CD4-positive, alpha-beta T cell (primary cell): ENCODE measurements at regions of chr19 and their contacts with region 1.

Region 1: GRCh38 chr19:4007021-4007835 is at the start of gene PIAS4:
- DNase-seq: peak; percentile 93 to 99 (median 96)
- ATAC-seq: peak; percentile 87
- H3K4me3 ChIP-seq: peak within 1 kb of the TSS; percentile 85
- H3K4me3 Mint-ChIP-seq: peak within 1 kb of the TSS; percentile 89
- H3K27ac ChIP-seq: peak within 1 kb of the TSS in 1 of 2 donors; percentile 60
- H3K27ac Mint-ChIP-seq: peak within 1 kb of the TSS; percentile 80
- H3K4me1 ChIP-seq: peaks cover 48% of the 10 kb centered on the region
- H3K4me1 Mint-ChIP-seq: peaks cover 15% of the 10 kb centered on the region
- H3K27me3 ChIP-seq: no peaks in the 10 kb centered on the region
- H3K27me3 Mint-ChIP-seq: no peaks in the 10 kb centered on the region
- CTCF ChIP-seq: peak; percentile 24
- total RNA-seq, gene PIAS4: 14.5 to 16.5 TPM

Region 2: GRCh38 chr19:3950871-3951861 is 56.1 kb before region 1 on chr19:
- CTCF ChIA-PET with region 1: no interaction called
- POLR2A ChIA-PET with region 1: no interaction called
- intact Hi-C with region 1: no loop called
- DNase-seq: no peak
- ATAC-seq: no peak
- H3K4me3 ChIP-seq: peak overlapping the region; percentile 10
- H3K4me3 Mint-ChIP-seq: peak overlapping the region; percentile 18
- H3K27ac ChIP-seq: no peak overlapping the region
- H3K27ac Mint-ChIP-seq: no peak overlapping the region
- H3K4me1 ChIP-seq: peaks cover 16% of the 10 kb centered on the region
- H3K4me1 Mint-ChIP-seq: peaks cover 6% of the 10 kb centered on the region
- H3K27me3 ChIP-seq: no peaks in the 10 kb centered on the region
- H3K27me3 Mint-ChIP-seq: peaks cover 6% of the 10 kb centered on the region
- CTCF ChIP-seq: no peak

Region 3: GRCh38 chr19:4115050-4115817 is 108.0 kb after region 1 on chr19:
- CTCF ChIA-PET with region 1: no interaction called
- POLR2A ChIA-PET with region 1: interaction called, 4 read pairs
- intact Hi-C with region 1: loop called (anchors 2 to 5 kb)
- DNase-seq: peak; percentile 45 to 89 (median 66)
- ATAC-seq: peak; percentile 100
- H3K4me3 ChIP-seq: peak overlapping the region; percentile 9
- H3K4me3 Mint-ChIP-seq: peak overlapping the region; percentile 75
- H3K27ac ChIP-seq: peak overlapping the region; percentile 55 to 58
- H3K27ac Mint-ChIP-seq: peak overlapping the region; percentile 87
- H3K4me1 ChIP-seq: peaks cover 46% of the 10 kb centered on the region
- H3K4me1 Mint-ChIP-seq: peaks cover 25% of the 10 kb centered on the region
- H3K27me3 ChIP-seq: no peaks in the 10 kb centered on the region
- H3K27me3 Mint-ChIP-seq: no peaks in the 10 kb centered on the region
- CTCF ChIP-seq: no peak

Region 4: DNA sequence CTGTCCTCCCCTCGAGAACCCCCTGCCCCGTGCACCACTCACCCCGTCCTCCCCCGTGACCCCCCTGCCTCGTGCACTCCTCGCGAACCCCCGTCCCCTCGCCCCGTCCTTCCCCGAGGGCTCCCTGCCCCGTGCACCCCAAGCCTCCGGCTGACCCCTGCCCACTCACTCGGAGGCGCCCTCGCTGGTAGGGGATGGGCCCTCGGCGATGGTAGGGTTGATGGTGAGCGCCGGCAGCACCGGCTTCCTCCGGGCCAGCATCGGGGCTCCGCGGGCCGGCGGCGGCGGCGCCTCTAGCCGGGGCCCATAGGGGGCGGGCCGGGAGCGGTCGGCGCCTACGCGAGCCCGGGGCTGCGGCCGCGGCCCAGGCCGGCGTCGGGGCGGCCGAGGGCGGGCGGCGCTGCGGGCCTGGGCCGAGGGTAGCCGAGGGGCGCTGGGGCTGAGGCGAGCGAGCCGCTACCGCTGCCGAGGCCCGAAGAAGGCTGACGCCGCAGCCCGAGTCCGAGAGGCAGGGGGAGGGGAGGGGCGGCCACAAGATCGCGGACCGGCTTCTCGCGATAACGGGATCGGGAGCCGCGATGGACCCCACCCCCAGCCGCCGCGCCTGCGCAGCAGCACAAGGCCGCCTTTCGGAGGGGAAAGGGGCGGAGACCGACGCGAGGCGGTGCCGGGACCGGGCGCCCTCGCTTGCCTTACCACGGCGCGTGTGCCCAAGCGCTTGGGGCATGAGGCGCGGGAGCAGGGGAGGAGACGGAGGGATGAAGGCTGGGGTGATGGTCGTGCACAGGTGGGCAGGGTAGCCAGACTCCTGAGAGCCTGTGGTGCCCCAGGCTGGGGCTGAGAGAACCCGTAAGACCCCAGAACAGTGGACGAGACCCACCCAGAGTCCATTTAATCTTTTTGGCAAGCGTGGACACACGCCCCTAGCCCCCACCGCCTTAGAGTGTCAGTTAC is 116.7 kb after region 1 on chr19 and contains the start of gene MAP2K2:
- CTCF ChIA-PET with region 1: no interaction called
- POLR2A ChIA-PET with region 1: no interaction called
- intact Hi-C with region 1: loop called in 1 of 2 experiments (anchors 5 kb)
- DNase-seq: peak; percentile 92 to 99 (median 96)
- ATAC-seq: peak; percentile 97
- H3K4me3 ChIP-seq: peak within 1 kb of the TSS; percentile 59
- H3K4me3 Mint-ChIP-seq: peak within 1 kb of the TSS; percentile 93
- H3K27ac ChIP-seq: peak within 1 kb of the TSS; percentile 44 to 53
- H3K27ac Mint-ChIP-seq: peak within 1 kb of the TSS; percentile 89
- H3K4me1 ChIP-seq: peaks cover 32% of the 10 kb centered on the region
- H3K4me1 Mint-ChIP-seq: peaks cover 26% of the 10 kb centered on the region
- H3K27me3 ChIP-seq: no peaks in the 10 kb centered on the region
- H3K27me3 Mint-ChIP-seq: no peaks in the 10 kb centered on the region
- CTCF ChIP-seq: no peak
- total RNA-seq, gene MAP2K2: 72.7 to 77.6 TPM

Region 5: DNA sequence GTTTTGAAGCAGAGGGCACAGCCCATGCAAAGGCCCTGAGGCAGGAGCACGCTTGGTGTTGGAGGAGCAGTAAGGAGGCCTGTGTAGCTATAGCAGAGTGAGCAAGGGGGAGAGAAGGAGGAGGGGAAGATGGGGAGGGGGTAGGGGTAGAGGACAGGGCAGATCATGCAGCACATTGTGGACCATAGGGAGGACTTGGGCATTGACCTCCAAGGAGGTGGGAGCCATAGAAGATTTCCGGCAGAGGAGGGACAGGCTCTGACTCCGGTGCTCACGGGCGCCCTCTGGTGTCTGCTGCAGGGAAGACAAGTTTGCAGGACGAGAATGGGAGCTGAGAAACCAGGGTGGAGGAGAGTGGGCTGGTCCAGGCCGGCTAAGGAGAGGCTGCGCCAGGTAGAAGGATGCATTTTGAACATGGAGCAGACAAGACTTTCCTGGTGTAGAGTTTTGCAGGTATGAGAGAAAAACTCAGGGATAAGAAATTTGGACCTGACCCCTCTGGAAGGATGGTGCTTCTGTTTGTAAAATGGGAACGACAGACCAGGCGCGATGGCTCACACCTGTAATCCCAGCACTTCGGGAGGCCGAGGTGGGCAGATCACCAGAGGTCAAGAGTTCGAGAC is 132.5 kb after region 1 on chr19:
- CTCF ChIA-PET with region 1: interaction called, 6 read pairs
- POLR2A ChIA-PET with region 1: interaction called, 3 read pairs
- intact Hi-C with region 1: loop called in 1 of 2 experiments (anchors 5 kb)
- DNase-seq: peak; percentile 77 to 95 (median 88)
- ATAC-seq: peak; percentile 93
- H3K4me3 ChIP-seq: no peak overlapping the region
- H3K4me3 Mint-ChIP-seq: no peak overlapping the region
- H3K27ac ChIP-seq: no peak overlapping the region
- H3K27ac Mint-ChIP-seq: no peak overlapping the region
- H3K4me1 ChIP-seq: peaks cover 15% of the 10 kb centered on the region
- H3K4me1 Mint-ChIP-seq: peaks cover 11% of the 10 kb centered on the region
- H3K27me3 ChIP-seq: peaks cover 0 to 3% of the 10 kb centered on the region in 2 experiments
- H3K27me3 Mint-ChIP-seq: peaks cover 7% of the 10 kb centered on the region
- CTCF ChIP-seq: peak; percentile 74

Region 6: DNA sequence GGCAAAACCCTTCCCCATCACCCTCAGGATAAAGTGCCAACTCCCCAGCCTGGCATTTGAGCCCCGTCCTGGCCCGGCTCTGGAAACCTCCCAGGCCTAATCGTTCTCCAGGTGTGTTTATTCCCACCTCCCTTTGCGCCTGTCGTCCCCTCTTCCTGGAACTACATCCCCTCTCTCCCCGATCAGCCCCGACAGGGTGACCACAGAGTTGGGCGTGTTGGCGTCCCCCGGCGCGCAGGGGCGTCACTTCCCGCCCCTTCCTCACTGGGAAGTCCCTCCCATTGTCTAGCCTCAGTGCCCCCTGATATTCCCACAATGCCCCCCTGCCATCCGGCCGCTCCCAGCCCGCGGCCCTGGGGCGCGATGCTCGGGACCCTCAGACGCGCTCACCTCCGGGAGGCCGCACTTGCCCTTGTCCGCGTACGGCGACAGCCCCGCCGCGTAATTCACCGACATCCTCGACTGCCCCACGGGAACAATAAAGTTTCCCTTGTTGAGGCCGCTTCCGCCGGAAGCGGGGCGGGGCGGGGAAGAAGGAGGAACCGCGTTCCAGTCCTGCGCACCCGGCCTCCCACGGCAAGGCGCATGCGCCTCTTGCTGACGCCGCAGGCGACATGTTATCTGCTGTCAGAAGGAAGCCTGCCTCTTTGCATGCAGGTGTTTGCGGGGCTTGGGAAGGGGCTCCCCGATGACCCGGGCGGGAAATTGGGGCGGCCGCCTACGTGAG is 175.0 kb after region 1 on chr19 and contains the starts of genes ANKRD24 and SIRT6:
- CTCF ChIA-PET with region 1: no interaction called
- POLR2A ChIA-PET with region 1: no interaction called
- intact Hi-C with region 1: loop called in 1 of 2 experiments (anchors 5 kb)
- DNase-seq: peak; percentile 90 to 98 (median 96)
- ATAC-seq: peak; percentile 80
- H3K4me3 ChIP-seq: peak within 1 kb of the TSS; percentile 96
- H3K4me3 Mint-ChIP-seq: peak within 1 kb of the TSS; percentile 99
- H3K27ac ChIP-seq: peak within 1 kb of the TSS; percentile 66 to 80
- H3K27ac Mint-ChIP-seq: peak within 1 kb of the TSS; percentile 96
- H3K4me1 ChIP-seq: peaks cover 47% of the 10 kb centered on the region
- H3K4me1 Mint-ChIP-seq: peaks cover 32% of the 10 kb centered on the region
- H3K27me3 ChIP-seq: no peaks in the 10 kb centered on the region
- H3K27me3 Mint-ChIP-seq: peaks cover 3% of the 10 kb centered on the region
- CTCF ChIP-seq: no peak
- total RNA-seq, gene ANKRD24: 0.59 to 0.60 TPM
- total RNA-seq, gene SIRT6: 11.2 to 14.2 TPM

Region 7: GRCh38 chr19:4199699-4200293 is 192.6 kb after region 1 on chr19:
- CTCF ChIA-PET with region 1: no interaction called
- POLR2A ChIA-PET with region 1: no interaction called
- intact Hi-C with region 1: loop called in 1 of 2 experiments (anchors 5 kb)
- DNase-seq: no peak
- ATAC-seq: no peak
- H3K4me3 ChIP-seq: no peak overlapping the region
- H3K4me3 Mint-ChIP-seq: no peak overlapping the region
- H3K27ac ChIP-seq: no peak overlapping the region
- H3K27ac Mint-ChIP-seq: no peak overlapping the region
- H3K4me1 ChIP-seq: peaks cover 8% of the 10 kb centered on the region
- H3K4me1 Mint-ChIP-seq: peaks cover 10% of the 10 kb centered on the region
- H3K27me3 ChIP-seq: peaks cover 31 to 33% of the 10 kb centered on the region in 2 experiments
- H3K27me3 Mint-ChIP-seq: peaks cover 61% of the 10 kb centered on the region
- CTCF ChIP-seq: no peak